A673 (cell line): ENCODE measurements at regions of chr11 and their contacts with region 1.

Region 1: GRCh38 chr11:35873721-35874120 is 70.1 kb upstream of the LDLRAD3 start:
- DNase-seq: no peak
- H3K4me3 ChIP-seq: no peak overlapping the region
- H3K27ac ChIP-seq: no peak overlapping the region
- H3K4me1 ChIP-seq: no peaks in the 10 kb centered on the region
- H3K27me3 ChIP-seq: peaks cover 4% of the 10 kb centered on the region
- CTCF ChIP-seq: no peak

Region 2: GRCh38 chr11:35887737-35888136 is 14.0 kb after region 1 on chr11:
- CTCF ChIA-PET with region 1: interaction called, 12 read pairs
- POLR2A ChIA-PET with region 1: no interaction called
- intact Hi-C with region 1: no loop called
- DNase-seq: no peak
- H3K4me3 ChIP-seq: no peak overlapping the region
- H3K27ac ChIP-seq: no peak overlapping the region
- H3K4me1 ChIP-seq: no peaks in the 10 kb centered on the region
- H3K27me3 ChIP-seq: peaks cover 6% of the 10 kb centered on the region
- CTCF ChIP-seq: no peak

Region 3: DNA sequence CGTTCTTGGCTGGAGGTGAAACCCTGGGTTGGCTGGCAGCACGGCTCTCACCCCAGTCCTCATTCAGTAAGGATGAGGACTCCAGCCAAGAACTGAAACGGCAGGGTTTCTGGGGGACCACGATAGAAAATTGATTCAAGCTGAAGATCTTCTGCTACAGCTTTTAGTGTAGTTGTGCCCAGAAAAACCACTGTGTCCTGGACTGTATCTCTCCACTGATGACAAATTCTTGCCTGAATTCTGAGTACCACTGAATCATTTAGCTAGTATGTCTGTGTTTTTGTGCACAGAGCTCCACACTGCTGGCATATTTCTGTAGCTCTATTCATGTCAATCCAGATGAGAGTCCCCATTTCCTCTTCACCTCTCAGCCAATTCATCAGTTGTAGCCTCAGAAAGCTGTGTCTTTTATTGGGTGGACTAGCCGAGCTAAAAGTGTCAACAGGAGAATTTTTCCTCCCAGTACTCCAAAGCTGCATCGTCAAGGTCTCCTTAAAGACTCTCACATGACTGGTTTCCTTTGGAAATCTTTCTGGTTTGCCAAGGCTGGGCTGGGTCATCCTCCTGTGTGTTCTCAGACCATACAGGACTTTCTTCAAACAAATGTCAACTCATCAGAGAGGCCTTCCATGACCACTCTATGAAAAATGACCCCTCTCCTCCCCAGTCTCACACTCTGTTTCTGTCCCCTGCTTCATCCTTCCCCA is 214.7 kb after region 1 on chr11:
- CTCF ChIA-PET with region 1: no interaction called
- POLR2A ChIA-PET with region 1: interaction called, 10 read pairs
- intact Hi-C with region 1: no loop called
- DNase-seq: no peak
- H3K4me3 ChIP-seq: no peak overlapping the region
- H3K27ac ChIP-seq: no peak overlapping the region
- H3K4me1 ChIP-seq: peaks cover 11% of the 10 kb centered on the region
- H3K27me3 ChIP-seq: no peaks in the 10 kb centered on the region
- CTCF ChIP-seq: no peak